ENCODE measurements at regions of chr6 and their contacts with region 1.

Region 1: DNA sequence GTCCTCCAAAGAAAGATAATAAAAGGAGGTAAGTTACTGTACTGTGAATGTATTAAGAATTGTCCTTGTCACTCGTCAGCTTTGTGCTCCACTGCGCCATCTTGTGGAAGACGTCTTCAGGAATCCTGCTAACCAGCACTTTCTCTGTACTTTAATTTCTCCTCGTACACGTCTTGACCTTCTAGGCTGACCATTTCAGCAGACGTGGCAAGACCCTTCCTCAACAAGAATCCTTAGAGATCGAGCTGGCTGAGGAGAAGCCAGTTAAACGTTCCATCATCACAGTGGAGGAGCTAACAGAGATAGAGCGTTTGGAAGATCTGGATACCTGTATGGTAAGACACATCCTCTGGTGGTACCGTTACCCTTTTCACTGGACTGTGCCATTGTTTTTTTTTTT is 95.5 kb upstream of the SCGN start:
- DNase-seq: peak; percentile 80
- H3K4me3 ChIP-seq: no peak overlapping the region
- H3K27ac ChIP-seq: no peak overlapping the region
- H3K4me1 ChIP-seq: peaks cover 7% of the 10 kb centered on the region
- CTCF ChIP-seq: peak; percentile 97

Region 2: DNA sequence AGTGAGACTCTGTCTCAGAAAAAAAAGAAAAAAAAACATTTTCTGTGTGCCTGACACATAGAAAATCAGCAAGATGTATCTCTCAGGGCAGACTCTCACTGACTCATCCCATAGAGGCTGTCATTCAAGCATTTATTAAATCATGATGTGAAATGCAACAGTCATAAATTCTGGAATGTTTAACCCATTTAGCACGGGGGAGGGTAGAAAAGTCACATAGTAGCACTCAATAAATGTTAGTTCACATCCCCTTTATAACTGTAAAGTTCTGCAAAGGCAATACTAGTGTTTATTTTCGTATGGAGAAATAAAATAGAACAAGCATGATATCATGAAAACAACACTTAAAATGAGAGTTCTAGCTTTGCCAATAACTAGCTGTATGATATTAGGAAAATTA is 292.9 kb before region 1 on chr6:
- CTCF ChIA-PET with region 1: no interaction called
- POLR2A ChIA-PET with region 1: interaction called, 4 read pairs
- intact Hi-C with region 1: loop called (anchors 1 kb)
- DNase-seq: no peak
- H3K4me3 ChIP-seq: no peak overlapping the region
- H3K27ac ChIP-seq: no peak overlapping the region
- H3K4me1 ChIP-seq: peaks cover 12% of the 10 kb centered on the region
- CTCF ChIP-seq: no peak

Region 3: DNA sequence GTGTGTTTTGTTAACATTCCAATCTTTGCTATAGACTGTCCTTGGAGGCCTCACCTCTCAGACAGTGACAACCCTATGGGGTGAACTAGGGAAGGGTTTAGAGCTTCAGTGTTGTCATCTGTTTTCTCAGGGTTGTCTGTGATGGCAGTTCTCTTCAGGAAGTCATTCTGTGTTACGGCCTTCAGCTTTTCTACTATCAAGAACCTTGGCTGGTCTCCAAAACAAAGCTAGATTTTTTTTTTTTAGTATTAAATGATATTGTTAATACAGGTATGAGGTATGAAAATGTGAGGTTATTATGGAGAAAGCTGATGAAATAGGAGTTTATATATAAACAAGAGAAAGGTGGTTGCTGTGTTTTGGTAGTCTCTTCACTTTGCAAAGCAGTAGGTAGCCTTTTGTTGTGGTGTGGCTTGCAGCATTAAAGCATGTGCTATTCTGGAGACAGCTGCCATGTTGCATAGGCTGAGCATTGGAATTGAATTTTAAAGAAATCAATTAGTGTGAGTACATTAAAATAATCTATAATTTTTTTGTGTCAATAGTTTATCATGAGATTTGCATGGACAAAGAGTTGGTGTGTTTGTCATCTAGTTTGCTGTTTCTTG is 114.7 kb before region 1 on chr6:
- CTCF ChIA-PET with region 1: no interaction called
- POLR2A ChIA-PET with region 1: no interaction called
- intact Hi-C with region 1: no loop called
- DNase-seq: no peak
- H3K4me3 ChIP-seq: no peak overlapping the region
- H3K27ac ChIP-seq: no peak overlapping the region
- H3K4me1 ChIP-seq: peaks cover 5% of the 10 kb centered on the region
- CTCF ChIP-seq: no peak

Region 4: DNA sequence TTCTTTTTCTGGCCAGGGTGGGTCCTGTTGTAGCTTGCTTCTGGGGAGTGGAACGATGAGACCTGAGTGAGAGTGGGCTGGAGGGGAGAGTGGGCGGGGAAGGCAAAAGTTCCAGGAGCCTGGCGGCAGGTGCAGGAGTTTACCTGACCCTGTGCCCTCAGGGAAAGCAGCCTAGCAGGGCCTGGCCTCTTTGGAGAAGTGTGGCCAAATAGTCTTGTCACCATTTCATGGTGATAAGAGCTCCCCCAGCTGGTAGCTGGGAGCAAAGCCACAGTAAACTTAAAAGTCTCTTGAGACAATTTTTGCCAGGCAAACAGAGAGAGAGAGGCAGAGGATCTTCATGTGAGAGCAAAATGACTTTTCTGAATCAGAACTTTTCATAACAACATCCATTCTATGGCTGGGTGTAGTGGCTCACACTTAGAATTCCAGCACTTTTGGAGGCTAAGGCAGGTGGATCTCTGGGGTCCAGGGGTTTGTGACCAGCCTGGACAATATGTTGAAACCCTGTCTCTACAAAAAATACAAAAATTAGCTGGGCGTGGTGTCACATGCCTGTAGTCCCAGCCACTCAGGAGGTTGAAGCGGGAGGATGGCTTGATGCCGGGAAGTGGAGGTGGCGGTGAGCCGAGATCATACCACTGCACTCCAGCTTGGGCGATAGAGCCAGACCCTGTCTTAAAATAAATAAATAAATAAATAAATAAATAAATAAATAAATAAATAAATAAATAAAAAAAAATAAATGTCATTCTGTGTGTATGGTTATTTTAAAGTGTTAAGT is 66.3 kb before region 1 on chr6:
- CTCF ChIA-PET with region 1: interaction called, 3 read pairs
- POLR2A ChIA-PET with region 1: no interaction called
- intact Hi-C with region 1: loop called (anchors 5 kb)
- DNase-seq: peak; percentile 93
- H3K4me3 ChIP-seq: no peak overlapping the region
- H3K27ac ChIP-seq: peak overlapping the region; percentile 55
- H3K4me1 ChIP-seq: peaks cover 23% of the 10 kb centered on the region
- CTCF ChIP-seq: peak; percentile 90

Region 5: GRCh38 chr6:25601800-25602673 is 45.5 kb after region 1 on chr6:
- CTCF ChIA-PET with region 1: no interaction called
- POLR2A ChIA-PET with region 1: no interaction called
- intact Hi-C with region 1: loop called (anchors 5 kb)
- DNase-seq: peak; percentile 71
- H3K4me3 ChIP-seq: no peak overlapping the region
- H3K27ac ChIP-seq: no peak overlapping the region
- H3K4me1 ChIP-seq: peaks cover 5% of the 10 kb centered on the region
- CTCF ChIP-seq: peak; percentile 98

Region 6: DNA sequence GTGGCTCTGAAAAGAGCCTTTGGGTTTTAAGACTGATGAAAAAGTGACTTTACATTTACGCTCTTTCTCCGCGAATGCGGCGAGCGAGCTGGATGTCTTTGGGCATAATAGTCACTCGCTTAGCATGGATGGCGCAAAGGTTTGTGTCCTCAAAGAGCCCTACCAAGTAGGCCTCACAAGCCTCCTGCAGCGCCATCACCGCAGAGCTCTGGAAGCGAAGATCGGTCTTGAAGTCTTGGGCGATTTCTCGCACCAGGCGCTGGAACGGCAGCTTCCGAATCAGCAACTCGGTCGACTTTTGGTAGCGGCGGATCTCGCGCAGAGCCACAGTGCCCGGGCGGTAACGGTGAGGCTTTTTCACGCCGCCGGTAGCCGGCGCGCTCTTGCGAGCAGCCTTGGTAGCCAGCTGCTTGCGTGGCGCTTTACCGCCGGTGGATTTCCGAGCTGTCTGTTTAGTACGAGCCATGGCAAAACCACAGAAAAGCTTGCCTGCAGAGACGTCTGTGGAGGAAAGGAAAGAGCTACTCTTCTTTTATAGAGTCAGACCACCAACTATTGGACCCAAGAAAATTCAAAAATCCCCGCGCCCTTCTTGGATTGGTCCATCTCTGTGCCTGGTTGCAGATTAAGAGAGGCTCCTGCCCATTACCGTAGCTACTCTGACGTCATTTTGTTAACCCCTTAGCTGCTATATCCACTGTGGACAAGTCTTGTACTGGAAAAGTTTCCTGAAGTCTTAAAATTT is 475.3 kb after region 1 on chr6:
- CTCF ChIA-PET with region 1: no interaction called
- POLR2A ChIA-PET with region 1: no interaction called
- intact Hi-C with region 1: no loop called
- DNase-seq: peak; percentile 99
- H3K4me3 ChIP-seq: peak overlapping the region; percentile 78
- H3K27ac ChIP-seq: peak overlapping the region; percentile 99
- H3K4me1 ChIP-seq: peaks cover 74% of the 10 kb centered on the region
- CTCF ChIP-seq: 0 out of 2 replicates have a peak, but pooled peaks have one; percentile 33

Measured in OCI-LY7 (cell line).